HepG2 (cell line): ENCODE measurements at regions of chr2 and their contacts with region 1.

Region 1: GRCh38 chr2:208025037-208025813 is at the start of gene PLEKHM3:
- DNase-seq: peak; percentile 75
- ATAC-seq: peak; percentile 98
- H3K4me3 ChIP-seq: peak within 1 kb of the TSS; percentile 86 to 93 (median 87)
- H3K27ac ChIP-seq: peak within 1 kb of the TSS; percentile 72
- H3K4me1 ChIP-seq: peaks cover 21% of the 10 kb centered on the region
- H3K27me3 ChIP-seq: no peaks in the 10 kb centered on the region; a peak in 1 of 5 replicates
- CTCF ChIP-seq: peak; percentile 45
- EP300 ChIP-seq: peak; percentile 50 to 66; a peak in 3 of 4 replicates
- POLR2A ChIP-seq: peak; percentile 80 to 90
- RAD21 ChIP-seq: peak; percentile 77
- total RNA-seq, gene PLEKHM3: 4.5 and 5.3 TPM in 2 replicates

Region 2: GRCh38 chr2:208013285-208014178 is 11.7 kb before region 1 on chr2:
- CTCF ChIA-PET with region 1: no interaction called
- POLR2A ChIA-PET with region 1: interaction called, 10 read pairs
- in situ Hi-C with region 1: no loop called
- intact Hi-C with region 1: no loop called
- DNase-seq: peak; percentile 92
- ATAC-seq: peak; percentile 94
- H3K4me3 ChIP-seq: no peak overlapping the region
- H3K27ac ChIP-seq: no peak overlapping the region
- H3K4me1 ChIP-seq: peaks cover 31% of the 10 kb centered on the region
- H3K27me3 ChIP-seq: no peaks in the 10 kb centered on the region
- CTCF ChIP-seq: no peak
- EP300 ChIP-seq: peak in 1 of 2 experiments; percentile 54; a peak in 2 of 4 replicates
- POLR2A ChIP-seq: no peak
- RAD21 ChIP-seq: no peak

Region 3: DNA sequence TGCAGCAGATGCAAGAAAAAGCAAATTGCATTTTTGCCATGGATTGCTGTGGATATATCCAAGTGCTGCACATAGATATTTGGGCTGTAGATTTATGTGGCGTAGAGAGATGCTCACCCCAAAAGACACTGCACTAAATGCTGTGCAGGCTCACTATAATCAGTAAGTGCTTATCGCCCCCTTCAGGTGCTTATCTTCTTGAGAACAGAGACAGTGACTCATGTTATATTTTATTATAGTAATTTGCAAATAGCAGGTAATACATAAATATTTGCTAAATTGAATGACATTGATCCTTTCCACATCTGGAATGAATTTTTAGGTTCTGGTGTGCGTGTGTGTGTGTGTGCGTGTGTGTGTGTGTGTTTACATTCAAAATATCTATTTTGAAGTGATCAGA is 36.9 kb after region 1 on chr2:
- CTCF ChIA-PET with region 1: no interaction called
- POLR2A ChIA-PET with region 1: no interaction called
- in situ Hi-C with region 1: no loop called
- intact Hi-C with region 1: no loop called
- DNase-seq: peak; percentile 71
- ATAC-seq: peak; percentile 87
- H3K4me3 ChIP-seq: no peak overlapping the region
- H3K27ac ChIP-seq: no peak overlapping the region
- H3K4me1 ChIP-seq: 0 out of 2 replicates have a peak, but pooled peaks cover 4% of the 10 kb centered on the region
- H3K27me3 ChIP-seq: 0 out of 5 replicates have a peak, but pooled peaks cover 0 to 6% of the 10 kb centered on the region in 2 experiments
- CTCF ChIP-seq: peak; percentile 69
- EP300 ChIP-seq: no peak
- POLR2A ChIP-seq: no peak
- RAD21 ChIP-seq: no peak; the same call in 1 of the 2 replicates